Colonic mucosa (tissue), 4 donors: ENCODE measurements at regions of chr4 and their contacts with region 1.

Region 1: GRCh38 chr4:111283061-111283677 is 660.3 kb upstream of the PITX2 start:
- DNase-seq: peak; percentile 74
- H3K4me3 ChIP-seq: no peak overlapping the region
- H3K27ac ChIP-seq: no peak overlapping the region
- H3K4me1 ChIP-seq: no peaks in the 10 kb centered on the region
- H3K27me3 ChIP-seq: no peaks in the 10 kb centered on the region
- CTCF ChIP-seq: peak; percentile 76

Region 2: GRCh38 chr4:109592367-109592766 is 1690.8 kb before region 1 on chr4:
- intact Hi-C with region 1: no loop called
- DNase-seq: no peak
- H3K4me3 ChIP-seq: no peak overlapping the region
- H3K27ac ChIP-seq: no peak overlapping the region
- H3K4me1 ChIP-seq: no peaks in the 10 kb centered on the region
- H3K27me3 ChIP-seq: no peaks in the 10 kb centered on the region
- CTCF ChIP-seq: no peak

Region 3: DNA sequence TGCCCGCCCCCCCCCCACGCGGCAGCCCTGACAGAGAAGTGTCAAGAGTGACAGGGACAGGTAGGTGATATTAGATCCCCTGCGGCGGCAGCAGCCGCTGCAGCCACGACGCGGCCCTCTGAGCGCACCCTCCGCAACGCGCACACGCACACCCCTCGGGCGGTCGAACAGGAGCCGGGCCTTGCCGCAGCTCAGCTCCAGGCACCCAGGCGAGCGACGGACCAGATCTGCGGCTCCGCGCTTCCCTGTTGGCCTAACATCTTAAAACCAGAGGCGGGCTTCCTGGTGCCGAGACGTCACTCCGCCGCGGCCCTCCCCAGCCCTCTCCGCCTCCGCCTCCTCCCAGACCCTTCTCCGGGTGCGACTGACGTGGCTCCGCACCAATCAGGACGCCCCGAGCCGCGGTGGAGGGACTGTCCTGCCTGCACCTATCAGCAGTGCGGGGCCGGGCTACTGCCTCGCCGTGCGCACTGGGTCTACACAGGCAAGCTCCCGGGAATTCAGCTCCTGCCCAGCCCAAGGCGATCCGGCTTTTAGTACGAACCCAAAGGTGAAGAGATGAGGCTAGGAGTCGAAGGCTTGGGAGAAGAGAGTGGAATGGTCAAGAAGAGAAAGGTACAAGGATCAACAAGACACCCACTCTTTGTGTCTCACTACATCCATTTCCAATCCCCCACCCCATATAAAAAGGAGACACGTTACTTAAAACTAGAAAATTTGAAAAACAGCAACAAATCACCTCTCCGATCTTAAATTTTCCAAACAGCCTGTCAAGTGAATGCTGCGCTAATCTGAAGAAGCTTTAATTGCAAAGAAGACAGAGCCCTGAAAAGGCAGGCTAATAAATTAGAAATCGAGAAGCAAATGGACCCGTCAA is 660.1 kb before region 1 on chr4 and contains the start of gene PITX2:
- intact Hi-C with region 1: loop called (anchors 10 kb)
- DNase-seq: peak; percentile 96
- H3K4me3 ChIP-seq: peak within 1 kb of the TSS; percentile 26
- H3K27ac ChIP-seq: no peak within 1 kb of the TSS
- H3K4me1 ChIP-seq: peaks cover 12% of the 10 kb centered on the region
- H3K27me3 ChIP-seq: peaks cover 92% of the 10 kb centered on the region
- CTCF ChIP-seq: no peak
- total RNA-seq, gene PITX2: 0.45 to 0.64 TPM

Region 4: DNA sequence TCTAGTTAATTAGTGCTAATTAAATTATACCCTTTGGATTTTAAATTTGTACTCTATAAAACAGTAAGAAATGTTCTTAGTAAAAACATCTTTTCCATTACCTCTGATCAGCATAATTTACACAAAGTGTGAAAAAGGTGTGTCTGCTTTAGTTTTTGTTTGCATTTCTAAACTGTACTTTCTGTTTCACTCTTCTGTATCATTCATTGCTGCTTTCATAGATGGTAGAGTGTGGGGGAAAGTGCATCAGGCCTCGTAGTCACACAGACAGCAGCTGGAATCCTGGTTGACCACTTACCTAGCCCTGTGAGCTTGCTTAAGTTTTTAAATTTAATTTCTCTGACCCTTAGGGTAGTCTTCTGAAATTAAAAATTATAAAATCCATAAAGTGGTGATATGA is 384.9 kb before region 1 on chr4:
- intact Hi-C with region 1: no loop called
- DNase-seq: no peak
- H3K4me3 ChIP-seq: no peak overlapping the region
- H3K27ac ChIP-seq: no peak overlapping the region
- H3K4me1 ChIP-seq: no peaks in the 10 kb centered on the region
- H3K27me3 ChIP-seq: no peaks in the 10 kb centered on the region
- CTCF ChIP-seq: no peak

Region 5: GRCh38 chr4:112060212-112060611 is 777.0 kb after region 1 on chr4:
- intact Hi-C with region 1: no loop called
- DNase-seq: no peak
- H3K4me3 ChIP-seq: no peak overlapping the region
- H3K27ac ChIP-seq: no peak overlapping the region
- H3K4me1 ChIP-seq: no peaks in the 10 kb centered on the region
- H3K27me3 ChIP-seq: no peaks in the 10 kb centered on the region
- CTCF ChIP-seq: no peak